ENCODE measurements at regions of chr1 and their contacts with region 1.

Region 1: DNA sequence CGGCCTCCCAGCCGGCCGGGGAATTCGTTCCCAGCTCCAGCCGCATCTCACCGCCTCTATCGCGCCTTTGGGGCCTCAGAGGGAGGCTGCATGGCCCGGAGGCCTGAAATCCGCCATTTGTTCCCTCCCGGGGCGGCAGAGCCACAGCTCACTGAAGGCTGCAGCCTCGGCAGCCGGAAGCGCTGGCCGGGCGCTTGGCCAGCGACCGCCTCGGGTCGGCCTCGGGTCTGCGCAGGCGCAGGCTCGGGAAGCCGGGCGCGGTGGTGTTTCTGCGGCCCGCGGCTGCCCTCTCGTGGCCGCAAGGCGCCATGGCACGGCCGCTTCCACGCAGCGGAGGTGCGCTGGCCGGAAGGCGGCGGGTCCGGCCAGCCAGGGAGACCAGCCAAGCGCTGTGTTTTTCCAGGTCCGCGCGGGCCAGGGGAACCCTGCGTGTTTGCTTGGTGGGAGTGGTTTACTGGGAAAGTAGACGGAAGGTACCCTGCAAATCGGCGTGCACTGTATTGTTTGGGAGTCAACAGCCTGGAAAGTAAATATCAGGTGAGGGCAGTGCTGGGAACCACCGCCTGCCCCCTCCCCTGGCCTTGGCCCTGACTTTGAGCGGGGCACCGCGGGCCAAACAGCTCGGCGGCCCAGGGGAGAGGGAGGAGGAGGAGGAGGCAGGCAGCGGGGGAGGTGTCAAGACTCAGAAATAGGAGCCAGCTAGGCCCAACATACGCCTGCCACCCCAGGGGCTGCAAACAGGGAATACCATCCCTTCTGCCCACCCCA is 52.7 kb upstream of the CD34 start:
- DNase-seq: peak; percentile 91 to 96 (median 91)
- ATAC-seq: peak; percentile 66 to 84 (median 80)
- H3K4me3 ChIP-seq: peak overlapping the region; percentile 1 to 73 (median 57)
- H3K27ac ChIP-seq: peak overlapping the region; percentile 88 to 100 (median 96)
- H3K4me1 ChIP-seq: peaks cover 0 to 59% (median 48%) of the 10 kb centered on the region in 12 donors
- H3K27me3 ChIP-seq: peaks cover 0 to 15% (median 0%) of the 10 kb centered on the region in 9 donors
- CTCF ChIP-seq: peak; percentile 94 to 100 (median 100)
- POLR2A ChIP-seq: peak; percentile 48 to 85

Region 2: GRCh38 chr1:207828485-207829158 is 135.0 kb before region 1 on chr1:
- intact Hi-C with region 1: loop called in 9 of 10 experiments (anchors 1 to 10 kb)
- DNase-seq: peak; percentile 79 to 85 (median 81)
- ATAC-seq: peak; percentile 26 to 61 (median 58)
- H3K4me3 ChIP-seq: no peak overlapping the region
- H3K27ac ChIP-seq: peak overlapping the region in 11 of 12 donors; percentile 15 to 100 (median 97)
- H3K4me1 ChIP-seq: peaks cover 13 to 98% (median 85%) of the 10 kb centered on the region in 12 donors
- H3K27me3 ChIP-seq: no peaks in the 10 kb centered on the region
- CTCF ChIP-seq: peak; percentile 77 to 95 (median 88)
- POLR2A ChIP-seq: peak in 1 of 2 donors; percentile 12

Region 3: DNA sequence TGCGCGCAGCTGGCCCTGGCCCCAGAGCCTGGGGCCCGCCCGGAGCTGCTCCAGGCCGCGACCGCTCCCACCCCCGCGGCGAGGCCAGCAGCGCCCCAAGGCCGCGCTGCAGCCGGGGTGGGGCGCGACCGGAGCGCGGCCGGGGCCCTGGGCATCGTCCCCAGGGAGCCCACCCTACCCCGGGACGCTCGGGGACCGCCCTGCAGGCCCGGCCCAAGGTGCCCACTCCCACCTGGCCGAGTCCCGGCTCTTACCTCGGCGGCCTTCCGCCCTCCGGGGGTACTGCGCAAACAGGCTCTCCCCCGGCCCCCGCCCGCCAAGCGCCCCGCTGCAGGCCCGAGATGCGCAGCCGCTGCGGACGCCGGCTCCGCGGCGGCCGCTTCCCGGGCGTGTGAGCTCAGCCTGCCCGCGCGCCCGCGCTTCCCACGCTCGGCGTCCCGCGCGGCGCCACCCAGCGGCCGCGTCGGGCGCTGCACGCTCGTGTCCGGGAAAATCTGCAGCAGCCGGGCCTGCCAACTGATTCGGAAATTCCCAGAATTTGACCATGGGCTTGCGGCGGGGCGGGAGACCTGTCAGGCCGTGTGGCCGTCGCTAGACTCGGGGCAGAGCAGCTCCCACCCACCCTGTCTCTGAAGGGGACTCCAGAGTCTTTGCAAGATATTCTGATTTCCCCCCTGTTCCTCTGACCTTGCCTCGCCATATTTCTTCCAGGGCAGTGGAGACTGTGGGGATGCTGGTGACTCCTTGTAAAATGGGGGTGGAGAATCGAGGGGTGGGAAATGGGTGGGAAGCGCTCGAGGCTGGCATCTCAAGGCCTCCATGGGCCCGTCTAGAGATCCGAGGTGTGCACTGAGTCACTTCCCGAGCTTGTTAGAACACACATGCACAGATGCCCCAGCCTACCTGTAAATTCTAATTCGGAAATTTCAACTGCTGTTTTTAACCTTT is 94.6 kb before region 1 on chr1:
- intact Hi-C with region 1: no loop called
- DNase-seq: peak; percentile 78 to 91 (median 82)
- ATAC-seq: peak in 3 of 4 donors; percentile 9 to 73 (median 69)
- H3K4me3 ChIP-seq: peak overlapping the region; percentile 80 to 99 (median 92)
- H3K27ac ChIP-seq: peak overlapping the region; percentile 95 to 99 (median 96)
- H3K4me1 ChIP-seq: peaks cover 12 to 75% (median 50%) of the 10 kb centered on the region in 12 donors
- H3K27me3 ChIP-seq: no peaks in the 10 kb centered on the region
- CTCF ChIP-seq: peak; percentile 56 to 99 (median 83)
- POLR2A ChIP-seq: peak in 1 of 2 donors; percentile 56

Region 4: DNA sequence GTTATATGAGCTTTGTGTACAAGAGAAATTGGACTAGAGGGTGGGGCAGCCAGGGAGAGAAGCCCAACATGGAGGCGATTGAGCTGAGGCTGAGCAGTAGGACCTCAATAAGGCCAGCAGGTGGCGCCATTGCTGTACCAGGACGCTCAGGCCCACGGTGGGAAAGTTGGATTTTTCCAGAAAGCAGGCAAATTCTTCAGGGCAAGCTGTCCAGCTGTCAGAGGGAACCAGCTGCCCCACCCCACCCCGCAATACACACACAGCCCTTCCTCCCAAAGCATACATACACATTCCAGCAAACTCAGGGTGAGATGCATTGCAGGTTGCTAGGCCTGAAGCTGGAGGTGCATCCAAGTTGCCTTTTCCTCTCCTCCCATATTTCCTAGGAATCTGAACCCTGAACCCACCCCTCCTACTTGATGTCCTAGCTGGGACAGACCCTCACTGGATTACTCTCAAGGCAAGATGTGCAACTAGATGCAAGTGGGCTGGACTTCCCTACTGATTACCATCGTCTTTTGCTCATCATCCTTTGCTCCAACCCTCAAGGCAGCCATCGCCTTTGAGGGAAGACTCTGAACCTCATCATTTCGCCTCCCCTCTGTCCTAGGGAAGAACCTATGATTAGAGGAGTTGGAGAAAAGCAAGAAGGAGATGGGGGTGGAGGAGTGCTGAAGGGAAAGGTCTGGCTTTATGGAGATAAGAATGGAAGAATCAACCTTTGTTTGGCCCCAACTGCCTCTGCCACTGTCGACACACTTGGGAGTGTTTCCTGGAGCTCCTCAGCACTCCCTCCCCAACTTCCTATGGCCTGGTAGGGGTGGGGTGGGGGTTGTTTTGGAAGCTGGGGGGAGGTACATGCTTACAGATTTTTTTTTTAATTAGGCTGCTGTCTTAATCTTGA is 78.2 kb before region 1 on chr1:
- intact Hi-C with region 1: loop called in 8 of 10 experiments (anchors 1 to 5 kb)
- DNase-seq: peak; percentile 85 to 91 (median 87)
- ATAC-seq: peak; percentile 84 to 93 (median 90)
- H3K4me3 ChIP-seq: no peak overlapping the region
- H3K27ac ChIP-seq: peak overlapping the region in 11 of 12 donors; percentile 51 to 91 (median 74)
- H3K4me1 ChIP-seq: peaks cover 16 to 84% (median 56%) of the 10 kb centered on the region in 12 donors
- H3K27me3 ChIP-seq: no peaks in the 10 kb centered on the region
- CTCF ChIP-seq: peak; percentile 93 to 98 (median 96)
- POLR2A ChIP-seq: peak in 1 of 2 donors; percentile 10

Region 5: DNA sequence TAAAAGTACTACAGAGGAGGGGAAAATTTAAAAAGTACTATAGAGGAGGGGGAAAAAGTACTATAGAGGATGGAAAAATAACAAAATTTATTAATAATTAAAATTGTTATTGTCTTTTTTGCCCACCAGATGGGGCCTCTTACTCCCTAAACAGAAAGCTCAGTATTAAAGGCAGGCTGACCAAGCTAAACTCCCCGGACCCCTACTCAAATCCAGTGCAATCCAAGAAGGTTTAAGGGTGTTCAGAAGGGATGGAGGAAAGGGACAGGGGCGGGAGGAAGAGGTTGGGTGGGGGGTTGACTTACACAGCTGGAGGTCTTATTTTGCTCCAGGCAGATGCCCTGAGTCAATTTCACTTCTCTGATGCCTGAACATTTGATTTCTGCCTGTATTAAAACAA is 66.4 kb before region 1 on chr1:
- intact Hi-C with region 1: loop called in 6 of 10 experiments (anchors 1 to 5 kb)
- DNase-seq: no peak
- ATAC-seq: peak in 2 of 4 donors; percentile 25 to 32
- H3K4me3 ChIP-seq: no peak overlapping the region
- H3K27ac ChIP-seq: peak overlapping the region in 9 of 12 donors; percentile 0 to 44 (median 23)
- H3K4me1 ChIP-seq: peaks cover 0 to 90% (median 34%) of the 10 kb centered on the region in 12 donors
- H3K27me3 ChIP-seq: no peaks in the 10 kb centered on the region
- CTCF ChIP-seq: peak in 11 of 12 donors; percentile 9 to 61 (median 43)
- POLR2A ChIP-seq: no peak

Region 6: DNA sequence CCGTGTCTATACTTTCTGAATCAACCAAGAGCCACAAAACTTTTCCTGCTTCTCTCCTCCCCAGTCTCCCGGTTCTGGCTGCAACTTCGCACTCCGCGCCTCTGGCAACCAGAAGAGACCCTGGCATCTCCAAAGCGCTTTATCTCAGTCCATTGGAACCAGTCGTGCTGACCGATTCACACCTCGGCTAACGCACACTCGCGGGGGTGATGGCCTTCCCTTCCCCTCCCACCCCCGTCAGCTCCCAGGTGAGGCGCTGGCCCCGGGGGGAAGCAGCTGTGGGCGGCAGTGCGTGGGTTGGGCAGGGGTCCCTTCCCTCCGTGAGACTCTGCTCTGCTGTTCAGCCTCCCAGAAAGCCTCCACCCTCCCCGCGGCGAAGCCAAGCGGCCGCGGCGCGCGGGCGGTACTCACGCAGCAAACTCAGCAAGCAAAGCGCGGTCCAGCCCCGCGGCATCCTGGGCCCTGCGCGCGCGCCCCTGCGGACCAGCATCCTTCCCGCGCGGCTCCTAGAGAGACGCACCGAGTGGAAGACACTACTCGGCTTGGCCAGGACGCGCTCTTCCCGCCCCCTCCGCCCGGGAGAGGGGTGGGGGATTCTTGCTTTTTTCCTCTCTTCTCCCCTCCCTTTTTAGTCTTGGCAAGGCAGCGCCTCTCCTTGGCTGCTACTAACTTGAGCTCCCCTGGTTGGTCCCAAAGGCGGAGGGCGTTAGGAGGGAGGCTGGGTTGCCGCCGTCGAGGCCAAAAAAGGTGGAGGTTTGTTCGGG is 52.8 kb before region 1 on chr1 and contains the start of gene CD34:
- intact Hi-C with region 1: loop called in 1 of 10 experiments (anchors 5 kb)
- DNase-seq: peak; percentile 70 to 84 (median 79)
- ATAC-seq: peak; percentile 46 to 75 (median 68)
- H3K4me3 ChIP-seq: peak within 1 kb of the TSS; percentile 24 to 88 (median 72)
- H3K27ac ChIP-seq: peak within 1 kb of the TSS; percentile 75 to 98 (median 90)
- H3K4me1 ChIP-seq: peaks cover 0 to 61% (median 26%) of the 10 kb centered on the region in 12 donors
- H3K27me3 ChIP-seq: peaks cover 0 to 29% (median 0%) of the 10 kb centered on the region in 9 donors
- CTCF ChIP-seq: no peak
- POLR2A ChIP-seq: peak in 1 of 2 donors; percentile 62
- total RNA-seq, gene CD34: 43.6 to 103 (median 63.8) TPM

Region 7: GRCh38 chr1:207919523-207920170 is 44.0 kb before region 1 on chr1:
- intact Hi-C with region 1: loop called in 6 of 10 experiments (anchors 1 to 5 kb)
- DNase-seq: peak in 3 of 5 donors; percentile 41 to 63 (median 43)
- ATAC-seq: peak; percentile 52 to 74 (median 62)
- H3K4me3 ChIP-seq: no peak overlapping the region
- H3K27ac ChIP-seq: peak overlapping the region; percentile 29 to 88 (median 64)
- H3K4me1 ChIP-seq: peaks cover 30 to 80% (median 72%) of the 10 kb centered on the region in 12 donors
- H3K27me3 ChIP-seq: no peaks in the 10 kb centered on the region
- CTCF ChIP-seq: no peak
- POLR2A ChIP-seq: no peak